Ovary (tissue), 10 donors: ENCODE measurements at regions of chr6 and their contacts with region 1.

Region 1: GRCh38 chr6:32424589-32425300 is 14.9 kb upstream of the HLA-DRA start:
- DNase-seq: no peak
- H3K4me3 ChIP-seq: no peak overlapping the region
- H3K27ac ChIP-seq: no peak overlapping the region
- H3K4me1 ChIP-seq: no peaks in the 10 kb centered on the region
- H3K27me3 ChIP-seq: no peaks in the 10 kb centered on the region
- CTCF ChIP-seq: no peak
- EP300 ChIP-seq: no peak
- POLR2A ChIP-seq: no peak

Region 2: GRCh38 chr6:31827286-31828079 is 597.3 kb before region 1 on chr6 and contains the start of gene HSPA1B:
- intact Hi-C with region 1: no loop called
- DNase-seq: peak; percentile 99 to 100 (median 100)
- H3K4me3 ChIP-seq: peak within 1 kb of the TSS; percentile 66
- H3K27ac ChIP-seq: peak within 1 kb of the TSS; percentile 96 to 98
- H3K4me1 ChIP-seq: peaks cover 10% of the 10 kb centered on the region
- H3K27me3 ChIP-seq: no peaks in the 10 kb centered on the region
- CTCF ChIP-seq: peak in 1 of 3 donors; percentile 46
- EP300 ChIP-seq: peak; percentile 96
- POLR2A ChIP-seq: peak; percentile 100
- total RNA-seq, gene HSPA1B: 119 to 506 (median 196) TPM

Region 3: DNA sequence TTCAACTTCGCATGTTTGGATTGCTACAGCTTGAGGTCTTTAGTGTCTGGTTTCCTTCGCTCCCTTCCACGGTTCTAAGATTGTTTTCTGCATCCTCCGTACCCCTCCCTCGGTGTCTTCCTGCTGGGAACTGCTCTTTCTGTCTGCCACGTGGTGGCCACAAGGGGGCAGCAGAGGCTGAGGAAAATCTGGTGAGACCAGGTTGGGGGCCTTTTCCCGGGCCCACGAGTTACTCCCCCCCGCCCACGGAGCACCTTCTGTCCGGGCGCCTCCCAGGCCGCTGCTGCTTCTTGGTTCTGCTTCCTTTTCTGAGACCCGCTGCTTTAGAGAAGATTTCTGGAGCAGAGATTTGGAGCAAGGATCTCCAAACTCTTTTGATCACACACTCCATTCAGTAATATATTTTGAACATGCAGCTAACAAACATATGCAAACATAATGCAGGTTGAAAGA is 179.8 kb before region 1 on chr6:
- intact Hi-C with region 1: loop called in 2 of 4 experiments (anchors 5 to 10 kb)
- DNase-seq: peak; percentile 88 to 94 (median 92)
- H3K4me3 ChIP-seq: no peak overlapping the region
- H3K27ac ChIP-seq: peak overlapping the region; percentile 0 to 30
- H3K4me1 ChIP-seq: no peaks in the 10 kb centered on the region
- H3K27me3 ChIP-seq: no peaks in the 10 kb centered on the region
- CTCF ChIP-seq: peak; percentile 82 to 91 (median 90)
- EP300 ChIP-seq: no peak
- POLR2A ChIP-seq: no peak

Region 4: GRCh38 chr6:32255199-32256153 is 169.3 kb before region 1 on chr6:
- intact Hi-C with region 1: no loop called
- DNase-seq: peak; percentile 77 to 86 (median 81)
- H3K4me3 ChIP-seq: peak overlapping the region; percentile 40
- H3K27ac ChIP-seq: peak overlapping the region; percentile 74 to 87
- H3K4me1 ChIP-seq: peaks cover 1% of the 10 kb centered on the region
- H3K27me3 ChIP-seq: no peaks in the 10 kb centered on the region
- CTCF ChIP-seq: peak; percentile 51 to 65 (median 64)
- EP300 ChIP-seq: no peak
- POLR2A ChIP-seq: no peak

Region 5: GRCh38 chr6:32462609-32463008 is 37.9 kb after region 1 on chr6:
- intact Hi-C with region 1: no loop called
- DNase-seq: no peak
- H3K4me3 ChIP-seq: no peak overlapping the region
- H3K27ac ChIP-seq: no peak overlapping the region
- H3K4me1 ChIP-seq: no peaks in the 10 kb centered on the region
- H3K27me3 ChIP-seq: no peaks in the 10 kb centered on the region
- CTCF ChIP-seq: no peak
- EP300 ChIP-seq: no peak
- POLR2A ChIP-seq: no peak

Region 6: GRCh38 chr6:32894080-32895005 is 469.6 kb after region 1 on chr6:
- intact Hi-C with region 1: no loop called
- DNase-seq: peak; percentile 92 to 97 (median 95)
- H3K4me3 ChIP-seq: peak overlapping the region; percentile 63
- H3K27ac ChIP-seq: peak overlapping the region; percentile 86 to 87
- H3K4me1 ChIP-seq: peaks cover 8% of the 10 kb centered on the region
- H3K27me3 ChIP-seq: no peaks in the 10 kb centered on the region
- CTCF ChIP-seq: no peak
- EP300 ChIP-seq: no peak
- POLR2A ChIP-seq: peak; percentile 74